ENCODE measurements at regions of chr1 and their contacts with region 1.

Region 1: DNA sequence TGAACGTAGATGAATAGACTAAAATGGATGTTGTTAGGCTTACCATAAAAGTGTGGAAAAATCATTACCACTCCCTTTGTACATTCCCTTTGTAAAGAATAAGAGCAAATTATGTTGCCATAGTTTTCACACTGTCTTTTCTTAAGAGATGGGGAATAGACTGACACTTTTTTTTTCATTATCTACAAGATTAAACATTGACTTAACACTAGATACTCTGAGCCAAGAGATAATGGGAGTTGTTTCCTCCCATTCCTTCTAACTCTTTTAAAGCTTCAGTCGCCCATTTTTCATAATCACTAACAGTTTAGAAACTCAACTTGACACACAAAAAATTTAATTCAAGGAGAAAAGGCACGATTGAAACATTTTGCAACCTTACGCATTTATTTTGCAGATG is 10.1 kb downstream of the AIDA start:
- DNase-seq: no peak
- ATAC-seq: no peak
- H3K4me3 ChIP-seq: no peak overlapping the region
- H3K4me3 Mint-ChIP-seq: no peak overlapping the region
- H3K27ac ChIP-seq: no peak overlapping the region
- H3K27ac Mint-ChIP-seq: peak overlapping the region; percentile 45
- H3K4me1 ChIP-seq: peaks cover 17% of the 10 kb centered on the region
- H3K4me1 Mint-ChIP-seq: peaks cover 37% of the 10 kb centered on the region
- H3K27me3 ChIP-seq: no peaks in the 10 kb centered on the region
- H3K27me3 Mint-ChIP-seq: no peaks in the 10 kb centered on the region
- CTCF ChIP-seq: no peak

Region 2: GRCh38 chr1:222665964-222666363 is 36.2 kb before region 1 on chr1:
- CTCF ChIA-PET with region 1: no interaction called
- POLR2A ChIA-PET with region 1: no interaction called
- intact Hi-C with region 1: no loop called
- DNase-seq: no peak
- ATAC-seq: no peak
- H3K4me3 ChIP-seq: no peak overlapping the region
- H3K4me3 Mint-ChIP-seq: no peak overlapping the region
- H3K27ac ChIP-seq: no peak overlapping the region
- H3K27ac Mint-ChIP-seq: no peak overlapping the region
- H3K4me1 ChIP-seq: peaks cover 18% of the 10 kb centered on the region
- H3K4me1 Mint-ChIP-seq: peaks cover 21% of the 10 kb centered on the region
- H3K27me3 ChIP-seq: no peaks in the 10 kb centered on the region
- H3K27me3 Mint-ChIP-seq: no peaks in the 10 kb centered on the region
- CTCF ChIP-seq: no peak

Region 3: DNA sequence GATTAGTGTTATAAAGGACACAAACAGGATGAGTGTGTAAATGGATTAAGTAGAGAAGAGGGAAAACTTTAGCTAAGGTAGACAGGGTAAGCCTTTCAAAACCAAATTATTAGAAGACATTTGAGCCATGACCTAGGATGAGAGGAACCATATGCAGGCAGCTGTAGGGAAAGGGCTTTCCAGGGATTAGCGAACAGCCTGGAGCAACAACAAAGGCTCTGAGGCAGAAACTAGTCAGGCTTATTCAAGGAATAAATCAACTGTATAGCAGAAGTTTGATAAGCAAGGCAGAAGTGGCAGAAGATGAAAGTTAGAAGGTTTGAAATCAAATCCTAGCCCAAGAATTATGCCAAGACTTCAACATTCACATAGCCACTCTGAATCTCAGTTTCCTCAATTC is 11.2 kb before region 1 on chr1:
- CTCF ChIA-PET with region 1: no interaction called
- POLR2A ChIA-PET with region 1: no interaction called
- intact Hi-C with region 1: loop called in 1 of 2 experiments (anchors 2 kb)
- DNase-seq: no peak
- ATAC-seq: no peak
- H3K4me3 ChIP-seq: no peak overlapping the region
- H3K4me3 Mint-ChIP-seq: no peak overlapping the region
- H3K27ac ChIP-seq: no peak overlapping the region
- H3K27ac Mint-ChIP-seq: no peak overlapping the region
- H3K4me1 ChIP-seq: no peaks in the 10 kb centered on the region
- H3K4me1 Mint-ChIP-seq: peaks cover 25% of the 10 kb centered on the region
- H3K27me3 ChIP-seq: no peaks in the 10 kb centered on the region
- H3K27me3 Mint-ChIP-seq: no peaks in the 10 kb centered on the region
- CTCF ChIP-seq: no peak

Region 4: DNA sequence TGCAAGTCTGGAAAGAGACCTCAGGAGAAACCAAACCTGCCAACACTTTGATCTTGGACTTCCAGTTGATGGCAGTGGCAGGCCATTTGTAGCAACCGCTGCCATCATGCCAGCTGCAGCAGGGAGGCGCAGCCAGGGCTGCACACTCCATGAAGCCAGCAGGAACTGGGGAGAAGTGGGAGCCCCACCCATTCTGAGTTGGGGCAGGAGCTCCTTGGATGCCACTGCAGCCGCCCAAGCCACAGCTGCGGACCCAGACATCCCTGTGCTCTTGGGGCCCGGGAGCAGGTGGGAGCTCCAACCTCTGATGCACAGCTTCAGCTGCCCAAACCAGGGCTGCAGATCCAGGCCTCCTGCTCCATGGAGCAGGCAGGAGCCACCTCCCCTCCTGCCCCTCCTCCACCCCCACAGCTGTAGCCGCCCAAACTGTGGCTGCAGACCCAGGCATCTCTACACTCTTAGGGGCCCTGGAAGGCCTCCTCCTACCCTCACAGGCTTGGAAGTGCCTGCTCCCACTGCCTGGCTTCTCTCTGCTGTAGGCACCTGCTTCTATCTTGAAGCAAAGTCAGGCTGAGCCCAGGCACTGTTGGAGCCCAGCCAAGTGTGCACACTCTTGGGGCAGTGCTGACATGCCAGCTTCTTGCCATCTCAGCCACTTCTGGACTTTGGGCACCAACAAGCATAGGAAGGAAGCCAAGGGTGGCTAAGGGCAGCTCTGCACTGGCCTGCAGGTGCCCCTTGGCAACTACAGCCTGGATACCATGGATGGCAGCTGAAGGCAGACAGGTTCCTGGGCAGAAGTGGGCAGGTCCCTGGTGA is 92.7 kb after region 1 on chr1:
- CTCF ChIA-PET with region 1: no interaction called
- POLR2A ChIA-PET with region 1: no interaction called
- intact Hi-C with region 1: no loop called
- DNase-seq: no peak
- ATAC-seq: no peak
- H3K4me3 ChIP-seq: no peak overlapping the region
- H3K4me3 Mint-ChIP-seq: no peak overlapping the region
- H3K27ac ChIP-seq: no peak overlapping the region
- H3K27ac Mint-ChIP-seq: no peak overlapping the region
- H3K4me1 ChIP-seq: no peaks in the 10 kb centered on the region
- H3K4me1 Mint-ChIP-seq: peaks cover 3% of the 10 kb centered on the region
- H3K27me3 ChIP-seq: no peaks in the 10 kb centered on the region
- H3K27me3 Mint-ChIP-seq: no peaks in the 10 kb centered on the region
- CTCF ChIP-seq: no peak